Activated CD4-positive, alpha-beta T cell treated with anti-CD3 and anti-CD28 coated beads, Interleukin-2, amount 10 ng/mL, durations not matched to agents 24 days and 14 days (primary cell): ENCODE measurements at regions of chr3 and their contacts with region 1.

Region 1: GRCh38 chr3:15629860-15630597 is 28.5 kb downstream of the BTD start:
- DNase-seq: peak; percentile 92
- H3K4me3 Mint-ChIP-seq: peak overlapping the region; percentile 53
- H3K27ac Mint-ChIP-seq: peak overlapping the region; percentile 67
- H3K4me1 Mint-ChIP-seq: peaks cover 28% of the 10 kb centered on the region
- H3K27me3 Mint-ChIP-seq: no peaks in the 10 kb centered on the region

Region 2: DNA sequence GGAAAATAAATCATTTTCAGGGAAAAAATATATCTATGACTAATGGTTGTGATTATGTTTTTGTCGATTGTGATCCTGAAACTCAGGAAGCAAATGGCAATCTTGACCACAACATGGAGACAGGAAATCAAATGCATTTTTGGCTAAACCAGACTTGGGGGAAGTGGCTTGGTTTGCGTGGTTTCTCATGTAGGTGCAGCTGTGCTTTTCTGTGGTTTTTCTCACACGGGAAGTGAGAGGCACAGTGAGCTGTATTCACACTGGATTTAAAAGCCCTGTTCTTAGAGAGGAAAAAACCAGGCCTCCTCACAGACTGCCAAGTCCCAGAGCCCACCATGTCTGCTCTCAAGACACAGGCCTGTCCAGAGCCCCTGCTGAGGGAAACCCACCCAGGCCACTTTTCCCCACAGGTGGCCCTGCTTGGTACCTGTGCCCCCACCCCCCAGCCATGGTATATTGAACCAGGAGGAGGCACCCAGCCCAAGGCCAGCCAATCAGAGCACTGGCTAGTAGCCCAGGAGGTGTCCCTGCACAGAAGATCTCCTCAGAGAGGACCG is 17.7 kb after region 1 on chr3:
- intact Hi-C with region 1: loop called (anchors 2 kb)
- DNase-seq: peak; percentile 92
- H3K4me3 Mint-ChIP-seq: peak overlapping the region; percentile 69
- H3K27ac Mint-ChIP-seq: peak overlapping the region; percentile 38
- H3K4me1 Mint-ChIP-seq: peaks cover 38% of the 10 kb centered on the region
- H3K27me3 Mint-ChIP-seq: peaks cover 21% of the 10 kb centered on the region

Region 3: GRCh38 chr3:15815696-15816095 is 185.7 kb after region 1 on chr3:
- intact Hi-C with region 1: loop called (anchors 1 kb)
- DNase-seq: no peak
- H3K4me3 Mint-ChIP-seq: no peak overlapping the region
- H3K27ac Mint-ChIP-seq: no peak overlapping the region
- H3K4me1 Mint-ChIP-seq: peaks cover 23% of the 10 kb centered on the region
- H3K27me3 Mint-ChIP-seq: no peaks in the 10 kb centered on the region

Region 4: DNA sequence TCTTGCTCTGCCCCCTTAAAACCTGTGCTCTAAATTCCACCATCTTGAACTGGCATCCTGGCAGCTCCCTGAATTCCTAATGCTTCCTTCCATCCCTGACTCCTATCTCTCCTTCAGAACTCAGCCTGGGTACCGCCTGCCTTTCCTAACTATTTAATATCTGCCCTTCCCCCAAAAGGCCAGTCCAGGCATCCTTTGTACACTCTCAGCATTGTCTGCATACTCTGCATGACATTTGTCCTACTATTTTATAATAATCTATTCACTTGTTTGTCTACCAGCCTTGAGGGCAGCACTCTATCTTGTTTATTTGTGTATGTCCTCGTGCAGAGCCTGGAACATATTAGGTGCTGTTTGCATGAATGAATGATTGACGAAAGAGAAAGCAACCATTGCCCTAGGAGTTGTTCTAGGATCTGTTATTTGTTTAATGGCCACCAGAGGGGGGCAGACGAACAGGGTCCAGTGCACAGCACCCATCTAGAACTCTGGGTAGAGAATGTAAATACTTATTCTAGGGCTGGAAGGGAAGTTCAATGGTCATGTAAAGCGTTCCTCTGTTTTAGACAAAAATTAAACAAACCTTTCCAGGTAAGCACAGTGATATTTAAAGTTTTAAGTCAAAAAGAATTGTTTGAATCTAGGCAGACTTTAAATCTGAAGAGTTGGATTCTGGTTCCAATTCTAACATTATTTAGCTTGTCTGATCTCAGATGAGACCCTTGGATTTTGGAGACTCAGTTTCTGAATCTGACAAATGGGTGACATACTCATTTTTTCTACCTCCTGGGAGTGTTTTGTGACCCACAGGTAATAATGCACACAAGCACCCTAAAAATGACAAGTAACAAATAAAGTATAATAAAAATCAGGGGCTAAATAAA is 418.6 kb after region 1 on chr3:
- intact Hi-C with region 1: loop called (anchors 1 kb)
- DNase-seq: peak; percentile 83
- H3K4me3 Mint-ChIP-seq: peak overlapping the region; percentile 17
- H3K27ac Mint-ChIP-seq: no peak overlapping the region
- H3K4me1 Mint-ChIP-seq: peaks cover 4% of the 10 kb centered on the region
- H3K27me3 Mint-ChIP-seq: peaks cover 4% of the 10 kb centered on the region

Region 5: DNA sequence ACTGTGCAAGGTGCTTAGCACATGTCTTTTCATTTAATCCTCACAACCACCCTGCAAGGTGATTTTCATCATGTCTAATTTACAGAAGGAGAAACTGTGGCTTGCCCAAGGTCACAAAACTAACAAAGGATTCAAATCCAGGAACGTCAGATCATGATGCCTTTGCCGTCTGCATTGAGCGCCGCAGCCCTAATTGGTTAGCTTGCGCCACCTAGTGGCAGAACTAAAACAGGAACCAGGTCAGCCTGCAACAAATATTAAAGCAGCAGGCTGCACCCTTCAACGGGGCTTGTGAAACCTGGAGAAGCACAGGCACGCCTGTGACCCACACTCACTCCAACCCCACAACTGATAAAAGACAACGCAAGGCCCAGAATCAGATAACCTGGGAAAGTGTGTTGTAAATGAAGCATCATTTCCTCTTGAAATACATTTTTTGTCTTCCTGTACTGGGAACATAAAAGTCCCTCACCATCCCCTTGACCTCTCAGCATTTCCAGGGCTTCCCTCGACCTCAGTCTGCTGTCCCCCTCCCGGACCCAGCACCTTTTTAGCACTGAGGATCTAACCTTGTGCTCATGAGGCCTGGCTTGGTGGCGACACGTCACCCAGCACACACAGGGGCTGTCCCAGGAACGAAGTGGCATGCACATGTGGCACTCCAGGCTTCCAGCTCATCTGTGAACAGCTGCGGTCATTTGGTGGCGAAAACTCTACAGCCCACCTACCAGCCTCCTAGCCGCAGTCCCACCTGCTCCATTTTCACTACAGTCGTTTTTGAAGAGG is 617.4 kb after region 1 on chr3:
- intact Hi-C with region 1: loop called (anchors 10 kb)
- DNase-seq: peak; percentile 94
- H3K4me3 Mint-ChIP-seq: no peak overlapping the region
- H3K27ac Mint-ChIP-seq: no peak overlapping the region
- H3K4me1 Mint-ChIP-seq: peaks cover 28% of the 10 kb centered on the region
- H3K27me3 Mint-ChIP-seq: no peaks in the 10 kb centered on the region

Region 6: GRCh38 chr3:16349986-16350596 is 720.1 kb after region 1 on chr3:
- intact Hi-C with region 1: no loop called
- DNase-seq: no peak
- H3K4me3 Mint-ChIP-seq: no peak overlapping the region
- H3K27ac Mint-ChIP-seq: no peak overlapping the region
- H3K4me1 Mint-ChIP-seq: peaks cover 26% of the 10 kb centered on the region
- H3K27me3 Mint-ChIP-seq: no peaks in the 10 kb centered on the region